Aorta (tissue), 5 donors: ENCODE measurements at regions of chr16 and their contacts with region 1.

Region 1: DNA sequence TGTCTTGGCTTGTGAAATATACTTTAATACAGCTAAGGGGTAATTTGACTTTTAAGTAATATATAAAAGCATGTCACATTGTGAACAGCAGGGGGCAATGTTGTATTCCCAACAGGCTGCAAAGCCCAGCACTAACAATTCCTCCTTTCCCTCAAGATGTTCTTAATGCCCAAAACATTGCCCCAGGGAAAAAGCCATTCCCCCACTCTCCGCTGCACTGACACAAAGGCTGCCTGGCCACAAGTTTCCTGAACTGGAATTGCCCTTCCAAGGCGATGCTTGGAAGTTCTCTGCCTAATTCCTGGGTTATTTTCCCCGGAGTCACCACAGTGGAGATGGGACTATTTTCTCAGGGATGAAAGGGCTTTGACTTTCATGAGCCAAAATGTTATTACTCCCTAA is 27.2 kb downstream of the CLEC16A start:
- DNase-seq: no peak
- ATAC-seq: peak; percentile 89
- H3K4me3 ChIP-seq: no peak overlapping the region
- H3K27ac ChIP-seq: peak overlapping the region in 1 of 2 donors; percentile 39
- H3K4me1 ChIP-seq: no peaks in the 10 kb centered on the region
- H3K27me3 ChIP-seq: no peaks in the 10 kb centered on the region

Region 2: GRCh38 chr16:11105038-11105903 is 133.7 kb after region 1 on chr16:
- intact Hi-C with region 1: loop called in 1 of 2 experiments (anchors 10 kb)
- DNase-seq: no peak
- ATAC-seq: peak; percentile 83
- H3K4me3 ChIP-seq: no peak overlapping the region
- H3K27ac ChIP-seq: peak overlapping the region in 1 of 2 donors; percentile 28
- H3K4me1 ChIP-seq: peaks cover 9 to 11% of the 10 kb centered on the region in 2 donors
- H3K27me3 ChIP-seq: no peaks in the 10 kb centered on the region

Region 3: DNA sequence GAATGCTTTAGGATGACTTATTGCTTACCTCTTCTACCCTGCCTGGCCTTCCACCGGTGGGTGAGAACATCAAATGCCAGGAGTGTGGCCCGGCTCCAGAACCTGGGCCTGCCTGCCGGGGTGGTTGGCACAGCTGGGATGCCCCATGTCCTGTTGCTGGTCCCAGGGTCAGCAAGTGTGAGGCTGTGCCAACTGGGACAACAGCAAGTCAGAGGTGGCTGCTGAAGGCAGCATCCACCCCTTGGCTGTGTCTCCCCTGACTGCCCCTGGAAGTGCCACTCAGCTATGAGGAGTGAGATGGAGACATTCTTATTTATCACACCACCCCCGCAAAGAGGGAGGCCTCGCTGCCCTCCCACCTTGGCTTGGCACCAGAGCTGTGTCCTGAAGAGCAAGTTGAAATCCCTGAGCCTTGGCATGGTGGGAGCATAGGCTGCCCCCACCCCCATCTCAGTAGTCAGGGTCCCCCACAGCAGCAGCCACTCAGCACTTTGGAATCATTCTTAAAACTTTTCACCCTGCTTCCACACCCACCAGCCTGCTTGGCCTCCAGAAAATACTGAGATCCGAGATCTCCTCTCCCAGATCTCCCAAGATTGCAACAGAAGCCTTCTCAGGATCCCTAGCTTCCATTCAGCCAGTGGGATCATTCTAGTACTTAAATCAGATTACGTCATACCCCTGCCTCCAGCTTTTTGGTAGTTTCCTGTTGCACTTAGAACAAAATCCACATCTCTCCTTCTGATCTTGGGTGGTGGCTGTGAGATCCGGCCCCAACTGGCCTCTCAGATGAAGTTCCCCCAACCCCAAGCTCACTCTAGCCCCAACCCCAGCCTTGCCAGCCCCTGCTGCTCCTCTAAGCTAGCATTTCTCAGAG is 156.9 kb after region 1 on chr16:
- intact Hi-C with region 1: loop called in 1 of 2 experiments (anchors 10 kb)
- DNase-seq: no peak
- ATAC-seq: no peak
- H3K4me3 ChIP-seq: no peak overlapping the region
- H3K27ac ChIP-seq: no peak overlapping the region
- H3K4me1 ChIP-seq: peaks cover 2 to 3% of the 10 kb centered on the region in 2 donors
- H3K27me3 ChIP-seq: no peaks in the 10 kb centered on the region

Region 4: GRCh38 chr16:11155284-11155806 is 183.8 kb after region 1 on chr16:
- intact Hi-C with region 1: no loop called
- DNase-seq: peak in 1 of 2 donors; percentile 38
- ATAC-seq: peak; percentile 34
- H3K4me3 ChIP-seq: no peak overlapping the region
- H3K27ac ChIP-seq: no peak overlapping the region
- H3K4me1 ChIP-seq: no peaks in the 10 kb centered on the region
- H3K27me3 ChIP-seq: no peaks in the 10 kb centered on the region

Region 5: GRCh38 chr16:11201498-11202259 is 230.1 kb after region 1 on chr16:
- intact Hi-C with region 1: no loop called
- DNase-seq: no peak
- ATAC-seq: no peak
- H3K4me3 ChIP-seq: no peak overlapping the region
- H3K27ac ChIP-seq: no peak overlapping the region
- H3K4me1 ChIP-seq: no peaks in the 10 kb centered on the region
- H3K27me3 ChIP-seq: no peaks in the 10 kb centered on the region

Region 6: DNA sequence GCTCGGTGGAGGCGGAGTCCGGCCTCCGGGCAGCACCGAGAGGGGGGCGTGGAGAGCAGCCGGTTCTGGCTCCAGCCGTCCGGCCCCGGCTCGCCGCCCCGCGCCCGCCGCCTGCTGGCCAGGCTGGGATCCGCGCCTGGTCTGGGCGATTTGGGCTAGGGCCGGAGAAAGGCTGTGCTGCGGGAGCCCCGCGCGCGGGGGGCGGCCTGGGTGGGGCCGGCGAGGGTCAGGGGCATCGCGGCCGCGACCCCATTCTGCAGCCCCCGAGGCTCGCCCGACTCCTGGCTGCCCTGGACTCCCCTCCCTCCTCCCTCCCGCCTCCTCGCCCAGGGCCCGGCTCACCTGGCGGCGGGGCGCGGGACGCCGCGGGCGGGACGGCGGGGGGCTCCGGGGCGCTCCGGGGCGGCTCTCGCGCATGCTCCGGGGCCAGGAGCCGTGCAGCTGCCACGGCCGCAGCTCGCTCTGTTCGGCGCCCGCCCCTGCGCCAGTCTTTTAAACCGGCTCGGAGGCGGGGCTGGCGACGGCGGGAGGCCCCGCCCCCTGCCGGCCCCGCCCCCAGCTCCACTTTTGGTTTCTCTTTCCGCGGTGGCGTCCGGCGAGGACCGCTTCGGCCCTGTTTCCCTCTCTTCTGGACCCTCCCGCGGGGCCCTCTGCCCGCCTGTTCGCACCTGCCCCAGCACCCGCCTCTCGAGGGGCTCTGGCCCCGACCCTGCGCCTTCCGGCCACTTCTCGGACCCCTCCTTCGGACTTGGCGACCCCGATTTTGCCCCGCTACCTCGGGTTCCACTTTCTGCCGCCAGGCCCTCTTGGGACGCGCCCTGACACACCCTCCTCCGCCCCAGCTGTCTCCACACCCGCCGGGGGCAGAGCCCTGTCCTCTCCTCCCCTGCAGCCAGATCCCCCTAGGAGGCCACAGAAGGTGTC is 284.4 kb after region 1 on chr16 and contains the start of gene SOCS1:
- intact Hi-C with region 1: loop called (anchors 1 to 2 kb)
- DNase-seq: peak; percentile 88 to 94
- ATAC-seq: peak; percentile 90
- H3K4me3 ChIP-seq: peak within 1 kb of the TSS; percentile 81 to 91
- H3K27ac ChIP-seq: peak within 1 kb of the TSS; percentile 81 to 93
- H3K4me1 ChIP-seq: no peaks in the 10 kb centered on the region
- H3K27me3 ChIP-seq: no peaks in the 10 kb centered on the region
- total RNA-seq, gene SOCS1: 4.3 to 6.4 TPM

Region 7: DNA sequence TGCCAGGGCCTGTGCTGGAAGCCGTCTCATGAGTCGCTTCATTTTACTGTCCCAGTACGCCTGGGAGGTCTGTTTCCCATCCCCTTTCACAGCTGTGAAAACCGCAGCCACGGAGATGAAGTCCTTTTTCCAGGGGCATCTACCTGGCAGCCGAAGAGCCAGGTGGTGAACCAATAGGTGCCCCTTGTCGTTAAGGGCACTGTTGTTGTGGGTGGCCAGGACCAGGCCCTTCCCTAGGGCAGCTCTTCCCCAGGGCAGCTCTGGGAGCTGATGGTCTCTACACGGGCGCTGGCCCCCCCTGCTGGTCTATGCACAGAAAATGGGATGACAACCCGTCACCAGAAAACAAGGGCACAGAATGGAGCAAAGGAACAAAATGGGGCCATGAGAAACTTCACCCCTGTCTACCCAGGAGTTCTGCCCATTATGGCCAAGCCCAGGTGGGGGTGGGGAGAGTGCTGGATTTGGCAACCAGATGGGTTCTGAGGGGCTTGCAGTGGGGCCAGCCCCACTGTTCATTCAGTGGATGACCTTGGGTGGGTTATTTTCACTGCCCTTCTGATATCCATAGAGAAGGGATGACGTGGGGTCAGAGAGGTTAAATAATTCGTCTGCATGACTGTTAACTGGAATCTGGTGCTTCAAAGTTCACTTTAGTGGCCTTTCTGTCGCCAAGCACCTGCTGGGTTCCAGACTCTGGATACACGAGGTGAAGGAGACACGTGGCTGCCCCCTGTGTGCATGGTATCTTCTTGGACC is 385.2 kb after region 1 on chr16:
- intact Hi-C with region 1: loop called (anchors 2 to 5 kb)
- DNase-seq: peak; percentile 81 to 87
- ATAC-seq: peak; percentile 68
- H3K4me3 ChIP-seq: no peak overlapping the region
- H3K27ac ChIP-seq: no peak overlapping the region
- H3K4me1 ChIP-seq: peaks cover 0 to 4% of the 10 kb centered on the region in 2 donors
- H3K27me3 ChIP-seq: no peaks in the 10 kb centered on the region